Common myeloid progenitor, CD34-positive (primary cell): ENCODE measurements at regions of chr12 and their contacts with region 1.

Region 1: GRCh38 chr12:53476769-53477209 is 22.5 kb downstream of the MAP3K12 start:
- DNase-seq: peak in 2 of 3 donors; percentile 43 to 51
- H3K4me3 ChIP-seq: no peak overlapping the region
- H3K27ac ChIP-seq: no peak overlapping the region
- H3K4me1 ChIP-seq: no peaks in the 10 kb centered on the region
- H3K27me3 ChIP-seq: no peaks in the 10 kb centered on the region

Region 2: DNA sequence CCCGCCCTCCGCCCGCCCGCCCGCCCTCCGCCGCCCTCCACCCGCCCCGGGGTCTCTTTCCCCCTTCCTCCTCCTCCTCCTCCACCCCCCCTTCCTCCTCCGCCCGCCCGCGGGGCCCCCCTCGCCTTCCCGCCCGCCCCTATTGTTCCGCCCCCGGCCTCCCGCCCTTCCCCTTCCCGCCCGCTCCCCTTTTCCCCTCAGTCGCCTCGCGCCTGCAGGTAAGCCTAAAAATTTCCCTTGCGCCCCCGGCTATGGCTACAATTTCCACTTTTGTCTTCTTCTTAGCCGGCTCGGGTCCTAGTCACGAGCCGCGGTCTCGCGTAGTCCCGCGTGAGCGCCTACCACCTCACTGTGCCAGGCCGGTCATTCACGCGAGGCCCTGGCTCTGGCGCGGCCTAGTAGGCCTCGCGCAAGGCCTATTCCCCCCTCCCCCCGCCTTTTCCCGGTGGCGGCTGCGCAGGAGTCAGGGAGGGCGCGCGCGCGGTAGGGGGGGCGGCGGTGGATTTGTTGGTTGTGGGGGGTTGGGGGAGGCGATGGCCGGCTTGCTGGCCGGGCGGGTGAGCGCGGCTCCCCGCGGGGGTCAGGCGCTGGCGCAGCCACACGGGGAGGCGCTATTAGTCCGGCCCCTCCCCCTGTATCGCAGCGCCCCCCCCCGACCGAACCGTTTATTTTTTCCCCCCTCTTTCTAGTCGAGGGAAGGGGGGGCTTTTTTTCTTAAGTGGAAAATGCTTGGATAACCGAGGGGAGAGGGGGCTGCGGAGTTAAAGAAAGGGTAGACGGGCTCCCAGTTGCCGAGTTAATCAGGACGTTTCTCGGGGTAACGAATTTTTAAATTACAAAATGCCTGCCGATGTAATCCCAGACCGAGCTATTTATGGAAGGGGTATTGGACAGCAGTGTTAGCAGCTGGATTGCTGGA is 24.4 kb before region 1 on chr12:
- CTCF ChIA-PET with region 1: interaction called, 11 read pairs
- POLR2A ChIA-PET with region 1: interaction called, 6 read pairs
- DNase-seq: peak; percentile 83 to 90 (median 89)
- H3K4me3 ChIP-seq: peak overlapping the region; percentile 55 to 98 (median 89)
- H3K27ac ChIP-seq: peak overlapping the region; percentile 94
- H3K4me1 ChIP-seq: peaks cover 8 to 20% (median 13%) of the 10 kb centered on the region in 4 experiments
- H3K27me3 ChIP-seq: no peaks in the 10 kb centered on the region

Region 3: GRCh38 chr12:53459097-53459496 is 17.7 kb before region 1 on chr12:
- CTCF ChIA-PET with region 1: interaction called, 24 read pairs
- POLR2A ChIA-PET with region 1: interaction called, 6 read pairs
- DNase-seq: no peak
- H3K4me3 ChIP-seq: no peak overlapping the region
- H3K27ac ChIP-seq: no peak overlapping the region
- H3K4me1 ChIP-seq: peaks cover 0 to 4% (median 2%) of the 10 kb centered on the region in 4 experiments
- H3K27me3 ChIP-seq: no peaks in the 10 kb centered on the region

Region 4: DNA sequence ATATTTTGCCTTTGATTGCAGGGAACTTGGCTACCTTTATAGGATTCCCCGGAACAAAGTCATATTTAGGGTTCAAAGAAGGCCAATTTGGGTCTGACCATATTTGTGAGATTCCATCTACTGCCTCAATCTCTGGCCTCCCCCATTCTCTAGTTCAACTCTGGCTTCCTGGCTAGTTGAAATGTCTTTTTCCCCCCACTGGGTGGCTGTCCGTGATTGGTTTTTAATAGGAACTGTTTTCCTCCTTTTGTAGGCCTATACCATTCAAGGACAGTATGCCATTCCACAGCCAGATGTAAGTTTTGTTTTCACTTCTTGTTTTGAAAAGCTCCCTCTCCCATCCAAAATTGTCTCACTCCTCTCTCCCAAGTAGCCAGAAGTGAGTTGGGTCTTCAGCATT is 11.1 kb before region 1 on chr12:
- CTCF ChIA-PET with region 1: interaction called, 24 read pairs
- POLR2A ChIA-PET with region 1: interaction called, 20 read pairs
- DNase-seq: no peak
- H3K4me3 ChIP-seq: no peak overlapping the region
- H3K27ac ChIP-seq: no peak overlapping the region
- H3K4me1 ChIP-seq: no peaks in the 10 kb centered on the region
- H3K27me3 ChIP-seq: no peaks in the 10 kb centered on the region

Region 5: DNA sequence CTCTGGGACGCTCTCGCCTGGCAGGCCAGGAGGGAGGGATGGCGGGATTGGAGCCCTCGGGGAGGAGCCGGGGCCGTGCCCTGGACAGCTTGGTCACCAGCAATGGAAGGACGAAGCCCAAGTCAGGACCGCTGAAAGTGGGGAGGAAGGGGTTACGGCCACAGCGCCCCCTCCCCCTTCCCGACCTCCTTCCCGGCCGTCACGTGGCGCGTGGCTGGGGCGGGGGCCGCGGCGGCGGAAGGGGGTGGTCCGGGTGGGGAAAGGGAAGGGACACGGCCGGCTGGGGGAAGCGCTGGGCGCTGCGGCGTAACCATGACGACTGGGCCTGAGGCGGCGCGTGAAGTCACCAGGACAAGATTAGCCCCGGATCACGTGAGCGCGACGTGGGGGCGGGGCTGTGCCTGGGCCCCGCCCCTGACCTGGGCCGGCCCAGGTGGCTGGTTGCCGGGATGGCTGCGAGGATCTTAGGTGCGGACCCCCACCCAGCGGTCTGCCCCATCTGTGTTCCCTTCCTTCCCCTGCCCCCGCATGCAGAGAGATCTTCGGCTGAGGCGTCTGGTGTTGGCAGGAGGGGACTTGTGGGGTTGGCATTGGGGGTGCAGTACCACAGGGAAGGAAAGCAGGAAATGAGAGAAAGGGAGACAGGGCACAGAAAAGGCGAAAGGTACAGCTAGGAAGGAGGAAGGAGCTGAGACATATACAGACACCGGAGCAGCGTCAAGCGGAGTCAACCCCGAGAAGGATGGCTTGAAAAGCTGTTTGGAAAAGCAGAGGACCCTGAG is 16.2 kb after region 1 on chr12:
- CTCF ChIA-PET with region 1: interaction called, 26 read pairs
- POLR2A ChIA-PET with region 1: interaction called, 9 read pairs
- DNase-seq: peak; percentile 86 to 91 (median 89)
- H3K4me3 ChIP-seq: peak overlapping the region; percentile 17 to 84 (median 68)
- H3K27ac ChIP-seq: peak overlapping the region; percentile 58 to 80
- H3K4me1 ChIP-seq: peaks cover 8 to 48% (median 26%) of the 10 kb centered on the region in 4 experiments
- H3K27me3 ChIP-seq: no peaks in the 10 kb centered on the region

Region 6: DNA sequence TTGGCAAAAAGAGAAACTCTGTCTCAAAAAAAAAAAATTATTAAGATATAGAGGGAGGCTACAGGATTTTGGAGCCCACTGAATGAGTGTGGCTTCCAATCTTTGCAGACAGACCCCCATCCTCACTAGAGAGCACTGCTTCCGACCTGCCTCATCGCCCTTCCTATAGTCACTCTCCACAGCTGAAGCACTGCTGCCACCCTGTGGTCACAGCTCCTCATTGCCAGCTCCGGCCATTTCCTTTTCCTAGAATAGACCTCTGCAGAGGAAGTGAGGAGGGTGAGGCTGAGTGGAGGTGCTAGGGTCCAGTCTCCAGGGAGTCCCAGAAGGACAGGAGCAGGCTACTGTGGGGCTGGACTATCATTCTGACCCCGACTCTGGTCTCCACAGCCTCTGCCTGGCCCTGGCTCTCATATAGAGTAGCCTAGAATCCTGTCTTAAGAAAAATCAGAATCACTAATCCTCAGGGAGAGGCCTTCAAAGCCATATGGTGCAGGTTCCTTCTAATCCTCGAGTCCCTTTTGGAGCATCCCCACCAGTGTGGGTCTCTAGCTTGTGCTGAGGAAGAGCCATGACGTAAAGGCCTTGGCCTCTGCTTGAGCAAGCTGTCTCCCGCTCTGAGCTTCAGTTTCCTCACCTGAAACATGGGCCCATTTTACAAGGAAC is 31.9 kb after region 1 on chr12:
- CTCF ChIA-PET with region 1: interaction called, 130 read pairs
- POLR2A ChIA-PET with region 1: interaction called, 6 read pairs
- DNase-seq: peak; percentile 67 to 75 (median 72)
- H3K4me3 ChIP-seq: peak overlapping the region in 1 of 7 experiments; percentile 21
- H3K27ac ChIP-seq: no peak overlapping the region
- H3K4me1 ChIP-seq: peaks cover 0 to 11% (median 6%) of the 10 kb centered on the region in 4 experiments
- H3K27me3 ChIP-seq: no peaks in the 10 kb centered on the region

Region 7: GRCh38 chr12:53518381-53518780 is 41.6 kb after region 1 on chr12:
- CTCF ChIA-PET with region 1: interaction called, 10 read pairs
- POLR2A ChIA-PET with region 1: no interaction called
- DNase-seq: no peak
- H3K4me3 ChIP-seq: no peak overlapping the region
- H3K27ac ChIP-seq: no peak overlapping the region
- H3K4me1 ChIP-seq: peaks cover 0 to 18% (median 10%) of the 10 kb centered on the region in 4 experiments
- H3K27me3 ChIP-seq: no peaks in the 10 kb centered on the region